HAP-1 (cell line): ENCODE measurements at regions of chr1 and their contacts with region 1.

Region 1: GRCh38 chr1:1307908-1308755 is at the starts of genes ACAP3 and PUSL1:
- DNase-seq: peak; percentile 90 to 91
- H3K4me3 ChIP-seq: peak within 1 kb of the TSS; percentile 79
- H3K4me1 ChIP-seq: peaks cover 34% of the 10 kb centered on the region
- H3K27me3 ChIP-seq: no peaks in the 10 kb centered on the region

Region 2: DNA sequence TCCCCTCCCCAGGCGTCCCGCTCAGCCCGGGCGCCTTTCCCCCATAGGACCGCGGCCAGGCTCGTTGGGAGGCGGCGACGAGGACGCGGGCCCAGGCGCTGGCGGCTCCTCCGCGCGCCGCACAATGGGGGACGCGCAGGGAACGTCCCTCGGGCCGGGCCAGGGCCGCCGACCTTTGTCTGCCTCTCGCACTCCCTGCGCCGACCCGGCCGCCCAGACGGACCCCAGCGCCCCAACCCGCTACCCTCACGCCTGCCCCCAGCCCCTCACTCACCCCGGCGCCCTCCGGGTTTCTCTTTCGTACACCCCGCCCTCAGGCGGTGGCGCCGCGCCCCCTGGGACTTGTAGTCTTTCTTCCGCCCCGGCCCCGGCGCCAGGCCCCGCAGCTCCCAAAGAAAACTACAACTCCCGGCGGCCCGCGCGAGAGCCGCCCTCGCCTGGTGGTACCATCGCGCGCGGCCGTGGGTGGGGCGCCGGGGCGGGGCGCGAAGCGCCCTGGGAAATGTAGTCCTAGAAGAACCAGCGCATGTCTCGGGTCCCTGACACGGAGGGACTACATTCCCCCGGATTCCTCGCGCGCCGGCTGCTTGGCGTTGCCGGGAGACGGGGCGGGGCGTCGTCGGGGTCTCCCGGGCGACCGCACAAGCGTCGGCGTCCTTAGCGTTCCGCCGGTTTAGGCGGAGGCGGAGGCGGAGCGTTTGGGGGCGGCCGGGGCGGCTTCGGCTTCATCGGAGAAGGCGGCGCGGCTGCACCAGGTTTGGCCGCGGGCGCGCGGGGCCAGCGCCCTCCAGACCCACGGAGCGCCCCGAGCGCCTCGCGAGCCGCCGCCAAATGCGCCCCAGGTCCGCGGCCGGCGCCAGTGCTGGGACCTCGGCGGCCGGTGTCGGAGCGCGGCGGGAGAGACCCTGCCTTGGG is 192.1 kb before region 1 on chr1 and contains the start of gene C1orf159:
- in situ Hi-C with region 1: loop called (anchors 10 kb)
- DNase-seq: peak; percentile 97 to 99
- H3K4me3 ChIP-seq: peak within 1 kb of the TSS; percentile 85
- H3K4me1 ChIP-seq: no peaks in the 10 kb centered on the region
- H3K27me3 ChIP-seq: peaks cover 5% of the 10 kb centered on the region

Region 3: GRCh38 chr1:1246577-1247340 is 61.4 kb before region 1 on chr1 and contains the start of gene C1QTNF12:
- in situ Hi-C with region 1: loop called (anchors 10 kb)
- DNase-seq: no peak
- H3K4me3 ChIP-seq: no peak within 1 kb of the TSS
- H3K4me1 ChIP-seq: no peaks in the 10 kb centered on the region
- H3K27me3 ChIP-seq: no peaks in the 10 kb centered on the region